Left colon (tissue), 2 donors: ENCODE measurements at regions of chr17 and their contacts with region 1.

Region 1: DNA sequence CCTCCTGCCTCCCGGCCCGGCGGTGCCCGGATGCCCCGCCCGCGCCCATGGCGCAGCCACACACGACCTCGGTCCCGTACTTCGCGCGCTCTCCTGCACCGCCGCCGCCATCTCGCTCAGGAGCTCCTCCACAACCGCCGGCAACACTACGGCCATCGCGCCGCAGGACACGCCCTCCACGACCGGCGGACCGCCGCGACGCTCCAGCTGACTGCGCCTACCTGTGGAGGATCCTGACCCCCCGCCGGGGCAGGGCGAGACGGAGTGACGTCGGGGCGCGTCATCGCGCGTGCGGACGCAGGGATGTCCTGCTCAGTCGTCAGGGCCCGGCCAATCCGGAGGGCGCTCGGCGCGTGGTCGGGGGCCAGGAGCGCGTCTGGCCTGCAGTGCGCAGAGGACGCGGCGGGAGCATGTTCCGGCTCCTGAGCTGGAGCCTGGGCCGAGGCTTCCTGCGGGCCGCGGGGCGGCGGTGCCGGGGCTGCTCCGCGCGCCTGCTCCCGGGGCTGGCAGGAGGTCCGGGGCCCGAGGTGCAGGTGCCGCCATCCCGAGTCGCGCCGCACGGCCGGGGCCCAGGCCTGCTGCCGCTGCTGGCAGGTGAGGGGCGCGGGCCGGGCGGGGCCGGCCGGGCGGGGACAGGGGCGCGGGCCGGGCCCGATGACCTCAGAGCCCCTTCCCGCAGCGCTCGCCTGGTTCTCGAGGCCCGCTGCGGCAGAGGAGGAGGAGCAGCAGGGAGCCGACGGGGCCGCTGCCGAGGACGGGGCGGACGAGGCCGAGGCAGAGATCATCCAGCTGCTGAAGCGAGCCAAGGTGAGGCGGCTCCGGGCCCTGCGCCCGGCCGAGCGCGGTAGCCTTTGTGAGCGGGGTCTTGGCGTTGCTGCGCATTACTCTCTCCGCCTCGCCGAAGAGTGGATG is at the starts of genes TTC19 and ZSWIM7:
- DNase-seq: peak; percentile 98
- ATAC-seq: peak; percentile 87
- total RNA-seq, gene TTC19: 50.7 to 53.6 TPM
- total RNA-seq, gene ZSWIM7: 22.4 to 23.5 TPM

Region 2: GRCh38 chr17:15944759-15945529 is 54.8 kb before region 1 on chr17 and contains the start of gene ADORA2B:
- intact Hi-C with region 1: loop called in 1 of 2 experiments (anchors 10 kb)
- DNase-seq: peak; percentile 68 to 77
- ATAC-seq: peak; percentile 59
- total RNA-seq, gene ADORA2B: 28.6 to 31.4 TPM

Region 3: DNA sequence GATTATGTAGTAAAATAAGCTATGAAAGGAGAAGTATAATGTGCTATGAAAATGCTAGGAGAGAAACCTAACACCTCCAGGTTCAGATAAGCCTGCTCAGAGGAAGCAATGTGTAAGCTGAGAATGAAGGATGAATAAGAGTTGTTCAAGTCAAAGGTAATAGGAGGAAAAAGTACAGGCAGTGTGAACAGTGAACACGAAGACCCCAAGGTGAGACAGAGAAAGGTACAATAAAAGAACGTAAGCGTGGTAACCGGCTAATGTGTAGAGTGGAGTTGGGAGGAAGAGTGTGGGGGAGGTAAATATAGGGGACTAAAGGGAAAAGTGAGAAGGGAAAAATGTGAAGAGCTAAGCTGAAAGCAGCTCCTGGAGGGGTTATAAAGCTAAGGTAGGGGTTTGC is 74.2 kb after region 1 on chr17:
- intact Hi-C with region 1: no loop called
- DNase-seq: no peak
- ATAC-seq: no peak

Region 4: GRCh38 chr17:16129441-16130205 is 129.9 kb after region 1 on chr17:
- intact Hi-C with region 1: no loop called
- DNase-seq: no peak
- ATAC-seq: peak; percentile 10